ENCODE measurements at regions of chr15 and their contacts with region 1.

Region 1: DNA sequence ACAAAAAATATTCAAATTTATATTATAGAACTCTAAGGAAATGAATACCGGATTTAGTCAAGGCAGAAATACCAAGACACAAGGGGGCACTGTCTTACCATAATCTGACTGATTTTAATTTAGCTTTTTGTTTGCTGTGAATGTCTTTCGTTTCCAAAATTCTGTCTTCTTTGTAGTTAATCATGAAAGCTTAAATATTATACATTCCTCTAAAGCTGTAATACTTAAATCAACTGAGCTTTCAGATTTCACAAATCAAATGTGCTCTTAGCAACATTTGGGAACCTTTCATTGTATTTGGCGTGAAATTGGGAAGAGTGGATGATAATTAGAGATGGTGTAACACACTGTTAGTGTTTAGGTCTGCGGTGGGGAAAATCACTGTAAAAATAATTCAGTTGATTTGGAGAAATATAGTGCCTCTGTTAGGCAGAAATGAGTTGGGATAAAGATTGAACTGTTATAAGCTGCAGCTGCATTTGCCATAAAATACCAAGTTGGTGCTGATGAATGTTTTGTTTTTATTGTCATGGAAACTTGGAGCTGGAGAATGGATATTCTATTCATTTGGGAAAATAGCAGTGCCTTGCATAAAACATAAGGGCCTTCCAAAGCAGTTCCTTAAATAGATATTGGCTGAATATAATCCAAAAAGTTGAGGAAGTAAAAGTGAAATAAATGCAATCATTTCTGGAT is 228.2 kb downstream of the TCF12 start:
- DNase-seq: peak; percentile 71
- H3K4me3 Mint-ChIP-seq: no peak overlapping the region
- H3K27ac Mint-ChIP-seq: peak overlapping the region; percentile 20
- H3K4me1 Mint-ChIP-seq: peaks cover 6% of the 10 kb centered on the region
- H3K27me3 Mint-ChIP-seq: no peaks in the 10 kb centered on the region

Region 2: GRCh38 chr15:56821721-56822425 is 324.8 kb before region 1 on chr15:
- intact Hi-C with region 1: loop called (anchors 10 kb)
- DNase-seq: peak; percentile 80
- H3K4me3 Mint-ChIP-seq: no peak overlapping the region
- H3K27ac Mint-ChIP-seq: no peak overlapping the region
- H3K4me1 Mint-ChIP-seq: peaks cover 10% of the 10 kb centered on the region
- H3K27me3 Mint-ChIP-seq: no peaks in the 10 kb centered on the region

Region 3: DNA sequence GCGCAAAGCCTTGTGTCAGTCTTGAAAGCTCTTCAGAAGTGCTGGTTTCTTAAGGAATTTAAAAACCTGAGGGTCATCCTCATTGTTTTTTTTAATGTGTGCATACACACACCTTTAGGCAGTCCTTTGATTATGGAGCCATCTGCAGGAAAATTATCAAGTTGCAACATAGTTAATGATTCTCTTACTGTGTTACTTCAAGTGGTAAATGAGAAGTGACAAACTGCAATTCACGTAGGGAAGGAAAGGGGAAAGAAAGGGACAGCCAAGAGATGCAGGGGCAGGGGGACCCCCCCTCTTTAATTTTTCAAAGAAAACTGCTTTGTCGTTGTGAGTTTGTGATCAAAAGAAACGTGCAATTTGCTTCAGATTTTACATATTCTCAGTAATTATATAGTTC is 67.2 kb after region 1 on chr15:
- intact Hi-C with region 1: loop called (anchors 5 kb)
- DNase-seq: no peak
- H3K4me3 Mint-ChIP-seq: no peak overlapping the region
- H3K27ac Mint-ChIP-seq: no peak overlapping the region
- H3K4me1 Mint-ChIP-seq: peaks cover 6% of the 10 kb centered on the region
- H3K27me3 Mint-ChIP-seq: no peaks in the 10 kb centered on the region

Region 4: GRCh38 chr15:57306161-57306943 is 159.7 kb after region 1 on chr15:
- intact Hi-C with region 1: loop called (anchors 1 kb)
- DNase-seq: peak; percentile 96
- H3K4me3 Mint-ChIP-seq: peak overlapping the region; percentile 71
- H3K27ac Mint-ChIP-seq: no peak overlapping the region
- H3K4me1 Mint-ChIP-seq: peaks cover 5% of the 10 kb centered on the region
- H3K27me3 Mint-ChIP-seq: peaks cover 9% of the 10 kb centered on the region